GM12878 (cell line): ENCODE measurements at regions of chr18 and their contacts with region 1.

Region 1: DNA sequence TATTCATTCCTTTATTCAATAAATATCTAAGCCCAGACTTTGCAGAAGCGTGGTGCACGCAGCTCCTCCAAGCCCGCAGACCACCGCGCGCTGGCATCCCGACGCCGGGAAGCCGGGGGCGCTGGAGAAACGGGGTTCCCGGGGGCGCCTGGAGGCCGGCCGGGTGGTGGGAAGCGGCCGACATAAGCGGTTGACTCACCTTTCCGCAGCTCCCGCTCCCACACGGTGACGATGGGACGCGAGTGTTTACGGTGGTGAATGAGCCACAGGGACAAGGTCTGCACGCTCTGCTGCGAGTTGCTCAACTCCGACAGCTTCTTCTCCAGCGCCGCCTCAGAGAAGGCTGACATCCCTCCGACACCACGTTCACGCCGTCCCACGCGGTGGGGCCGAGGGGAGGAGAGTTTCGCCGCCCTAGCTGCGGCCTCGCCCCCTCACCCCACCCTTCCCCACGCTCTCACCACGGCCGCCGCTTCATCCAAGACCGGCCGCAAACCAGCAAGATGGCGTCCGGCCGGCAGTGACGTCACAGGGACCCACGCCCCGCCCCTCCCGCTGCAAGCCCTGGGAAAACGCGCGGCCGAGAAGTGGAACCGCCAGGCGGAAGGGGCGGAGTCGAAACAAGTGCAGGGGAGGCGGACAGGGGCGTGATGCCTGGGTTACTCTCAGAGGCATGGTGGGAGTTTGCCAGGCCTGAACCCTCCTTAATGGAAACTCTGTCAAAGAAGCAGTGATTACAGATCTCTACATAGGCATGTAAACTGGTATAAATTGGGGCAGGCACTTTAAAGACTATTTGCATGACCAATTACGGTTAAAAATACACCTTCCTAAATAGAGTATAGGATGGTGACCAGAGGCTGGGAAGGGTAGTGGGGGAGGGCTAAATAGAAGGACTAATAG is at the start of gene RPRD1A:
- DNase-seq: peak; percentile 81
- ATAC-seq: peak; percentile 94
- H3K4me3 ChIP-seq: peak within 1 kb of the TSS; percentile 89
- H3K27ac ChIP-seq: peak within 1 kb of the TSS; percentile 72
- H3K4me1 ChIP-seq: no peaks in the 10 kb centered on the region
- H3K27me3 ChIP-seq: no peaks in the 10 kb centered on the region
- CTCF ChIP-seq: no peak
- EP300 ChIP-seq: peak; percentile 11 to 63; a peak in 2 of 4 replicates
- POLR2A ChIP-seq: peak; percentile 91
- RAD21 ChIP-seq: no peak
- polyA plus RNA-seq, gene RPRD1A: 16.2 to 19.1 TPM

Region 2: GRCh38 chr18:35972197-35973052 is 94.9 kb before region 1 on chr18 and contains the start of gene RMP24:
- CTCF ChIA-PET with region 1: no interaction called
- POLR2A ChIA-PET with region 1: interaction called, 6 read pairs
- RAD21 ChIA-PET with region 1: interaction called, 3 read pairs
- SMC1A ChIA-PET with region 1: interaction called, 5 read pairs
- in situ Hi-C with region 1: no loop called
- intact Hi-C with region 1: loop called (anchors 5 kb)
- DNase-seq: peak; percentile 84
- ATAC-seq: peak; percentile 95
- H3K4me3 ChIP-seq: peak within 1 kb of the TSS; percentile 94
- H3K27ac ChIP-seq: peak within 1 kb of the TSS; percentile 69
- H3K4me1 ChIP-seq: peaks cover 21% of the 10 kb centered on the region
- H3K27me3 ChIP-seq: no peaks in the 10 kb centered on the region
- CTCF ChIP-seq: no peak
- EP300 ChIP-seq: peak in 1 of 2 experiments; percentile 44; a peak in 1 of 4 replicates
- POLR2A ChIP-seq: peak; percentile 97
- RAD21 ChIP-seq: no peak

Region 3: GRCh38 chr18:36045241-36045999 is 21.9 kb before region 1 on chr18:
- CTCF ChIA-PET with region 1: no interaction called
- POLR2A ChIA-PET with region 1: no interaction called
- RAD21 ChIA-PET with region 1: no interaction called
- SMC1A ChIA-PET with region 1: interaction called, 5 read pairs
- in situ Hi-C with region 1: no loop called
- intact Hi-C with region 1: loop called (anchors 2 kb)
- DNase-seq: no peak
- ATAC-seq: no peak
- H3K4me3 ChIP-seq: no peak overlapping the region
- H3K27ac ChIP-seq: no peak overlapping the region
- H3K4me1 ChIP-seq: no peaks in the 10 kb centered on the region; the same call in 1 of the 2 replicates
- H3K27me3 ChIP-seq: no peaks in the 10 kb centered on the region
- CTCF ChIP-seq: no peak
- EP300 ChIP-seq: no peak
- POLR2A ChIP-seq: no peak
- RAD21 ChIP-seq: no peak

Region 4: DNA sequence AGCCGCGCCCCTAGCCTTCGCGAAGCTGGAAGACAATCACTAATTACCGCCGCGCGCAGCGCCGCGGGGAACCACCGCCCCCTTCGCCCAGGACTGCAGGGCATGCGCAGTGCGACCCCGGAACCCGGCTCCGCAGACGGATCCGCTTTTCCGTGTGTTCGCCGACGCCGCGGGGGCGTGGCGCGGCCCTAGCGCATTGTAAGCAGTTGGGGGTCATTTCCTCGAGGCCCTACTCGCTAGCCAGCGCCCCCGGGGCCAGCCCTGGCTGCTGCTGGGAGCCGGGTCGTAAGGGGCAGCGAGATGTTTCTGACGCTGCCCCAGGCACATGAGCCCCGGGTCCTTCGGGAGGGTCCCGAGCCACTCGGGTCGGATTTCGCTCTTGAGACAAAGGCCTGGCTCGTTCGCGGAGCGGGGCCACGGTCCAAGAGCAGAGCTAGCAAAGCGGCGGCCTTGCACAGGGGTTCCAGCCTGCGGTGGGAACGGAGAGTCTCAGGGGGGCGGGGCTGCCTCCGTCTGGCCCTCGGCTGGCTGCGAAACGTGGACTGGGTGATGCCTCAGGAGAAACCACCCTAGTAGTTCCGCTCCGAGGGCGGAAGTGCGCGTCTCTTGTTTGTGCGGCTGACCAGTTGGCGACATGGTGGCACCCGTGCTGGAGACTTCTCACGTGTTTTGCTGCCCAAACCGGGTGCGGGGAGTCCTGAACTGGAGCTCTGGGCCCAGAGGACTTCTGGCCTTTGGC is 62.2 kb after region 1 on chr18 and contains the starts of genes ELP2 and SLC39A6:
- CTCF ChIA-PET with region 1: no interaction called
- POLR2A ChIA-PET with region 1: interaction called, 7 read pairs
- RAD21 ChIA-PET with region 1: interaction called, 3 read pairs
- SMC1A ChIA-PET with region 1: interaction called, 4 read pairs
- in situ Hi-C with region 1: no loop called
- intact Hi-C with region 1: loop called (anchors 2 kb)
- DNase-seq: peak; percentile 76
- ATAC-seq: peak; percentile 93
- H3K4me3 ChIP-seq: peak within 1 kb of the TSS; percentile 85
- H3K27ac ChIP-seq: peak within 1 kb of the TSS; percentile 98
- H3K4me1 ChIP-seq: peaks cover 7% of the 10 kb centered on the region; the same call in 1 of the 2 replicates
- H3K27me3 ChIP-seq: no peaks in the 10 kb centered on the region
- CTCF ChIP-seq: 0 out of 6 replicates have a peak, but pooled peaks of 1 of the 3 experiments have one; percentile 1
- EP300 ChIP-seq: no peak
- POLR2A ChIP-seq: peak; percentile 94
- RAD21 ChIP-seq: no peak
- polyA plus RNA-seq, gene ELP2: 90.6 to 90.7 TPM
- polyA plus RNA-seq, gene SLC39A6: 12.4 to 19.5 TPM